ENCODE measurements at regions of chrX and their contacts with region 1.

Region 1: GRCh38 chrX:2819345-2820135 is 9.2 kb upstream of the GYG2 start:
- DNase-seq: peak; percentile 54

Region 2: DNA sequence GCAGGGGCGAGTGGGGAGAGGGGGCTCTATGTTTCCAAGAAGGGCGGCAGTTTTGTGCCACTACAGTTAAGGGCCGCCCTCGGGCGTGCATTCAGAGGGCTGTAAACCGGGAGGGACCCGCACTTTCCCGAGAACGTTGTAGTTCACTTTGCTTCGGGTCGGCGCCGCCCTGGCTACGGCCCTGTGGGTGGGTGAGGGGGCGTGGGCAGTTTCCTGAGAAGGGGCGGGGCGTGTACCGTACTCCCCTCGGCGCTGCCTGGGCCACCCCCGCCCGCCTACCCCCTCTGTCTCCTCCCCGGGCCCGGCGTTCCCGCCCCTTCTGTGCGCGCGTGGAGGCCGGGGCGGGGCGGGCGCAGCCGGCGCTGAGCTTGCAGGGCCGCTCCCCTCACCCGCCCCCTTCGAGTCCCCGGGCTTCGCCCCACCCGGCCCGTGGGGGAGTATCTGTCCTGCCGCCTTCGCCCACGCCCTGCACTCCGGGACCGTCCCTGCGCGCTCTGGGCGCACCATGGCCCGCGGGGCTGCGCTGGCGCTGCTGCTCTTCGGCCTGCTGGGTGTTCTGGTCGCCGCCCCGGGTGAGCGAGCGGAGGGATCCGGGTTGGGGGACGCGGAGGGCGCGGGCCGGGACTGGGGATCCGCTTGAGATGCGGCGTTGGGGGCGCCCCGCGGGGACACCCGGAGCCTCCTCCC is 128.5 kb before region 1 on chrX and contains the start of gene CD99:
- in situ Hi-C with region 1: loop called (anchors 25 kb)
- DNase-seq: peak; percentile 73
- total RNA-seq, gene CD99: 158 and 164 TPM in 2 replicates

Region 3: GRCh38 chrX:2707334-2707760 is 112.2 kb before region 1 on chrX:
- in situ Hi-C with region 1: no loop called
- DNase-seq: no peak

Region 4: GRCh38 chrX:3262901-3263300 is 443.4 kb after region 1 on chrX:
- in situ Hi-C with region 1: no loop called
- DNase-seq: peak; percentile 65

Measured in SK-MEL-5 (cell line).